OCI-LY7 (cell line): ENCODE measurements at regions of chr11 and their contacts with region 1.

Region 1: GRCh38 chr11:60831143-60831500 is 10.8 kb upstream of the CCDC86 start:
- DNase-seq: peak; percentile 84
- H3K4me3 ChIP-seq: no peak overlapping the region
- H3K27ac ChIP-seq: no peak overlapping the region
- H3K4me1 ChIP-seq: peaks cover 8% of the 10 kb centered on the region
- CTCF ChIP-seq: peak; percentile 99

Region 2: DNA sequence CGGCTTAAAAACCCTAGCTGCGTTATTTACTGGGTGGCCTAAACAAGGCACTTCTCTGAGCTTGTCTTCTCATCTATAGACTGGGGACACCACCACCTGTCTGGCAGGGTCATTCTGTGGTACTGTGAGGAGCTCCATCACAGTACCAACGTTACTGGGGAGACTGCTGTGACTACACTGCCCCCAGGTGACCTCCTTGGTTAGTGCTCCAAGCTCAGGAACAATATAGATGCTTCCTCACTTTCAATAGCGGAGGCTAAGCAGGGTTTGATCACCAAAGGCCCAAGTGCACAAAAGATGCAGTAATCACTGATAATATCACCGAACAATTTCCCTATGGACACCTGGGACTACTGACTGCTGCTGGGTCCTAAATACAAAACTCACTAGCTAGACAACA is 56.4 kb after region 1 on chr11:
- CTCF ChIA-PET with region 1: interaction called, 26 read pairs
- POLR2A ChIA-PET with region 1: interaction called, 4 read pairs
- intact Hi-C with region 1: loop called (anchors 1 kb)
- DNase-seq: peak; percentile 57
- H3K4me3 ChIP-seq: no peak overlapping the region
- H3K27ac ChIP-seq: no peak overlapping the region
- H3K4me1 ChIP-seq: no peaks in the 10 kb centered on the region
- CTCF ChIP-seq: peak; percentile 79

Region 3: DNA sequence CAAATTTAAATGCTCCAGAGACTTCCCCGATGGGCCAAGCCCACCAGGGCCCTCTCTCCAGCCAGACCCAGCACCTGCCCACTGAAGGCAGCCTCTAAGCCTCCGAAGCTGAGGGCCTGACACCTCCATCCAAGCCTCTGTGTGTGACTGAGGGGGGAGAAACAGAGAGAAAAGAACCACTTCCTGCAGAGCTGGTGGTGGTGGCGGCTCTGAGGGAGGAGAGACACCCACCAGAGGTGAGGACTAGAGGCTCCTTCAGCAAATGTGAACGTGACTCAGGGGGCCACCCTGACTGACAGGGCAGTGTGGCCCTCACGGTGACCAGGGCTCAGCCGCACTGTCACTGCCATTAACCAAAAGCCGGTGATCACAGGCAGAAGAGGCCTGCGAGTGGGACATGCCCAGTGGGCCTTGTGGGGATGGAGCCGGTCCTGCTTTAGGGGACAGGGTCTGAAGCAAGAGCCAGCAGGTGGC is 240.1 kb after region 1 on chr11:
- CTCF ChIA-PET with region 1: no interaction called
- POLR2A ChIA-PET with region 1: no interaction called
- intact Hi-C with region 1: loop called (anchors 2 kb)
- DNase-seq: peak; percentile 72
- H3K4me3 ChIP-seq: peak overlapping the region; percentile 40
- H3K27ac ChIP-seq: peak overlapping the region; percentile 93
- H3K4me1 ChIP-seq: peaks cover 30% of the 10 kb centered on the region
- CTCF ChIP-seq: no peak

Region 4: DNA sequence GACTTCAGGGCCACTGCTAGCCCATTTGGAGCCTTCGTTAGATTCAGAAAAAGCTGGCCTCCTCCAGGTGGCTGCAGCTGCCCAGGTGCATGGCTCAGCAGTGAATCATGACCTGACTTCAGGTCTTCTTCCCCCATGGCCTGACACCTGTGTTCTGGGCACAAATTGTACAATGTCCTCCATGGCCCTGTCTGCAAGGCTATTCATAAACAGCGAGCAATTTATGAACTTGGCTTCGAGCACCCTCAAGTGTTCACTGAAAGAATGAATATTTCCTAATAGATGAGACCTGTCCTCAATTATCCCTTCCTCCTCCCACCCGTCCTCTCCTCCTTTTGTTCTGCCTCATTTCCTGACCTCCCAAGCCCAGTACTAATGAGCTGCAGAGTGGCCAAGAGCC is 342.3 kb after region 1 on chr11:
- CTCF ChIA-PET with region 1: no interaction called
- POLR2A ChIA-PET with region 1: no interaction called
- intact Hi-C with region 1: loop called (anchors 5 kb)
- DNase-seq: peak; percentile 24
- H3K4me3 ChIP-seq: no peak overlapping the region
- H3K27ac ChIP-seq: no peak overlapping the region
- H3K4me1 ChIP-seq: no peaks in the 10 kb centered on the region
- CTCF ChIP-seq: peak; percentile 51